ENCODE measurements at regions of chr4 and their contacts with region 1.

Region 1: GRCh38 chr4:78318126-78318525 is 233.4 kb upstream of the ANXA3 start:
- DNase-seq: no peak
- H3K4me3 ChIP-seq: no peak overlapping the region
- H3K27ac ChIP-seq: no peak overlapping the region
- H3K4me1 ChIP-seq: no peaks in the 10 kb centered on the region
- H3K27me3 ChIP-seq: no peaks in the 10 kb centered on the region
- CTCF ChIP-seq: no peak

Region 2: GRCh38 chr4:78441756-78442155 is 123.6 kb after region 1 on chr4:
- CTCF ChIA-PET with region 1: no interaction called
- dilution Hi-C with region 1: no loop called
- in situ Hi-C with region 1: no loop called
- intact Hi-C with region 1: loop called (anchors 5 kb)
- DNase-seq: no peak
- H3K4me3 ChIP-seq: no peak overlapping the region
- H3K27ac ChIP-seq: no peak overlapping the region
- H3K4me1 ChIP-seq: peaks cover 10% of the 10 kb centered on the region
- H3K27me3 ChIP-seq: no peaks in the 10 kb centered on the region
- CTCF ChIP-seq: no peak